Activated naive CD4-positive, alpha-beta T cell treated with anti-CD3 and anti-CD28 coated beads for 36 hours (primary cell): ENCODE measurements at regions of chr7 and their contacts with region 1.

Region 1: GRCh38 chr7:96321658-96322372 is at the start of gene SLC25A13:
- DNase-seq: peak; percentile 53
- H3K4me3 Mint-ChIP-seq: peak within 1 kb of the TSS; percentile 83
- H3K27ac Mint-ChIP-seq: peak within 1 kb of the TSS; percentile 89
- H3K4me1 Mint-ChIP-seq: peaks cover 34% of the 10 kb centered on the region
- H3K27me3 Mint-ChIP-seq: peaks cover 6% of the 10 kb centered on the region
- total RNA-seq, gene SLC25A13: 4.0 to 5.7 TPM

Region 2: DNA sequence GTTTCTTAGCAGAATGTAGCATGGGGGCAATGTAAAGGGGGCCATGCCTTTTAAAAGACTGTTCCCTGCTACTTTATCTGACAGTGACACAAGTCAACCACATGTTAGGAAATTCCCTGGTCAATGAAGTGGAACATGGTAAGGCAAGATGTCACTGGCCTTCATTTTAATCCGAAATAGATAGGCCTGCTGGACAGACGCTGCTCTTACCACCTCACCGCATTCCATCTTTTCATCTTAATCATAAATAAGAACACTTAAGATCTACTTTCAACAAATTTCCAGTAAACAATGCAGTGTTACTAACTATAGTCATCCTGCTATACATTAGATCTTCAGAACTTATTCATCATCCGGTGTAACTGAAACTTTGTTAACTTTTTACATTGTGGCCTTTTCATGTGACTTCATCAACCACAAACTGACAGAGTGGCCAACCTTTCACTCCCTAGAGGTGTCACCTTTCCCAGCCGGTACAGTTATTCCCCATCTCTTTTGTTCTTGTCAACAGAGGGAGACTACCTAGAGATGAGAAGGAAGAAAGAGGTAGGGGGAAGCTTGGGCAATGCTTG is 820.5 kb before region 1 on chr7:
- CTCF ChIA-PET with region 1: no interaction called
- intact Hi-C with region 1: loop called (anchors 5 kb)
- DNase-seq: peak; percentile 52
- H3K4me3 Mint-ChIP-seq: no peak overlapping the region
- H3K27ac Mint-ChIP-seq: peak overlapping the region; percentile 37
- H3K4me1 Mint-ChIP-seq: peaks cover 24% of the 10 kb centered on the region
- H3K27me3 Mint-ChIP-seq: peaks cover 25% of the 10 kb centered on the region

Region 3: GRCh38 chr7:96131525-96131924 is 190.3 kb before region 1 on chr7:
- CTCF ChIA-PET with region 1: no interaction called
- intact Hi-C with region 1: no loop called
- DNase-seq: no peak
- H3K4me3 Mint-ChIP-seq: no peak overlapping the region
- H3K27ac Mint-ChIP-seq: no peak overlapping the region
- H3K4me1 Mint-ChIP-seq: no peaks in the 10 kb centered on the region
- H3K27me3 Mint-ChIP-seq: no peaks in the 10 kb centered on the region

Region 4: DNA sequence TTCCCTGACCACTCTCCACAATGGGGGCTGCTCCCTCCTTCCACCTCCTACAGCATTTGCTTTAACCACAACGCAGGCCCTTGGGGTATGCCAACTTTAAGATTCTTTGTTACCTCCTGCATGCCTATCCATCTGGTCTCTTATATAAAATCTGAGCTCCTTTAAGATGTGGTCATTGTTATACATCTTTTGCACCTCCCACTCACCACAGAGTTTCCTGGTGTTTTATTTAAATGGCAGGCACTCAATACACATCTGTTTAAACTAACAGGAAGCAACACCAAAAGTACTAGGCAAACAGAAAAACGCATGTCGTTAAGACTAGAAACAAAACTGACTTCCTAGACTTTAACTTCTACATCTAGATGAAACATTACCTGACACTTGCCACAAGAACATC is 36.2 kb before region 1 on chr7:
- CTCF ChIA-PET with region 1: interaction called, 6 read pairs
- intact Hi-C with region 1: loop called (anchors 1 kb)
- DNase-seq: peak; percentile 39
- H3K4me3 Mint-ChIP-seq: no peak overlapping the region
- H3K27ac Mint-ChIP-seq: peak overlapping the region; percentile 79
- H3K4me1 Mint-ChIP-seq: peaks cover 38% of the 10 kb centered on the region
- H3K27me3 Mint-ChIP-seq: no peaks in the 10 kb centered on the region

Region 5: GRCh38 chr7:96303686-96304443 is 17.9 kb before region 1 on chr7:
- CTCF ChIA-PET with region 1: interaction called, 3 read pairs
- intact Hi-C with region 1: loop called (anchors 1 kb)
- DNase-seq: no peak
- H3K4me3 Mint-ChIP-seq: no peak overlapping the region
- H3K27ac Mint-ChIP-seq: peak overlapping the region; percentile 73
- H3K4me1 Mint-ChIP-seq: peaks cover 39% of the 10 kb centered on the region
- H3K27me3 Mint-ChIP-seq: no peaks in the 10 kb centered on the region

Region 6: GRCh38 chr7:96709381-96710228 is 387.8 kb after region 1 on chr7 and contains the start of gene SEM1:
- CTCF ChIA-PET with region 1: no interaction called
- intact Hi-C with region 1: loop called (anchors 1 kb)
- DNase-seq: peak; percentile 77
- H3K4me3 Mint-ChIP-seq: peak within 1 kb of the TSS; percentile 92
- H3K27ac Mint-ChIP-seq: peak within 1 kb of the TSS; percentile 93
- H3K4me1 Mint-ChIP-seq: peaks cover 27% of the 10 kb centered on the region
- H3K27me3 Mint-ChIP-seq: peaks cover 4% of the 10 kb centered on the region
- total RNA-seq, gene SEM1: 37.7 to 47.5 TPM

Region 7: GRCh38 chr7:98133181-98133580 is 1811.4 kb after region 1 on chr7:
- CTCF ChIA-PET with region 1: no interaction called
- intact Hi-C with region 1: loop called (anchors 2 kb)
- DNase-seq: peak; percentile 41
- H3K4me3 Mint-ChIP-seq: no peak overlapping the region
- H3K27ac Mint-ChIP-seq: no peak overlapping the region
- H3K4me1 Mint-ChIP-seq: peaks cover 48% of the 10 kb centered on the region
- H3K27me3 Mint-ChIP-seq: no peaks in the 10 kb centered on the region